MCF 10A (cell line): ENCODE measurements at regions of chr14 and their contacts with region 1.

Region 1: DNA sequence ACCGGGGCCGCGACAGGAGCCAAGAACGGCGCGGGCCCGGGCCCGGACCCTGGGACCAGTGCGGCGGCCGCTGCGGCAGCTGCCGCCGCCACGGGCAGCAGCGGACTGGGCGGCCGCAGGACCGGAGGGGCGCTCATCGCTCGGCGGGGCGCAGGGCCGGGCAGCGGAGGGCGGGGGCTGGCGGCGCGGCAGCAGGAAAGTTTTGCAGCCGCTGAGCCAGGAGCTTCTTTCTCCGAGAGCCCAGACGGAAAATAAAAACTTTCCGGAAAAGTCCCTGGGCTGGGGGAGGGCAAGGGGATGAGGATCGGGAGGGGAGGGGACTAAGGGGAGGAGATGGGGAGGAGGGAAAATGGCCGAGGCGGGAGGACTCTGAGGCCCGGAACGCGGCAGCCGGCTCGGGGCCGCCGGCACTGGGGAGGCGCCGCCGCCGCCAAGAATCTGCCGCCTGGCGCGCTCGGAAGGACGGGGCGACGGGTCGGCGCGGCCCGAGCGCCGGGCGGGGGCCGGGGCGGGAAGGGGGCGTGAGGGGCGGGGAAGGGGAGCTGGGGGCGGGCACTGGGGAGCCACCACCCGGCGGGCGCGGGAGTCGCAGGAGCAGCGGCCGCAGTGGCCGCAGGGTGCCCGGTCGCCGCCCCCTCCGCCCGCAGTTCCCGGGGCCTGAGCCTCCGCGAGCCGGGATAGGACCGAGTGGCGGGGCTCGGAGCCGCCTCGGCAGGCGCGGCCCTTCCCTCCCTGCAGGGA is at the start of gene PRKD1:
- DNase-seq: peak; percentile 50
- H3K4me3 Mint-ChIP-seq: peak within 1 kb of the TSS; percentile 98
- H3K27ac Mint-ChIP-seq: peak within 1 kb of the TSS; percentile 26
- H3K4me1 Mint-ChIP-seq: peaks cover 38% of the 10 kb centered on the region
- H3K27me3 Mint-ChIP-seq: no peaks in the 10 kb centered on the region
- CTCF ChIP-seq: peak; percentile 17
- total RNA-seq, gene PRKD1: 7.9 and 8.8 TPM in 2 replicates

Region 2: GRCh38 chr14:29627137-29627536 is 300.4 kb before region 1 on chr14:
- CTCF ChIA-PET with region 1: interaction called, 3 read pairs
- POLR2A ChIA-PET with region 1: no interaction called
- intact Hi-C with region 1: loop called (anchors 5 kb)
- DNase-seq: peak; percentile 13
- H3K4me3 Mint-ChIP-seq: no peak overlapping the region
- H3K27ac Mint-ChIP-seq: peak overlapping the region; percentile 79
- H3K4me1 Mint-ChIP-seq: peaks cover 13% of the 10 kb centered on the region
- H3K27me3 Mint-ChIP-seq: no peaks in the 10 kb centered on the region
- CTCF ChIP-seq: no peak

Region 3: GRCh38 chr14:29734732-29735131 is 192.8 kb before region 1 on chr14:
- CTCF ChIA-PET with region 1: no interaction called
- POLR2A ChIA-PET with region 1: no interaction called
- intact Hi-C with region 1: no loop called
- DNase-seq: no peak
- H3K4me3 Mint-ChIP-seq: no peak overlapping the region
- H3K27ac Mint-ChIP-seq: no peak overlapping the region
- H3K4me1 Mint-ChIP-seq: peaks cover 14% of the 10 kb centered on the region
- H3K27me3 Mint-ChIP-seq: no peaks in the 10 kb centered on the region
- CTCF ChIP-seq: no peak

Region 4: GRCh38 chr14:29805415-29806123 is 122.0 kb before region 1 on chr14:
- CTCF ChIA-PET with region 1: no interaction called
- POLR2A ChIA-PET with region 1: no interaction called
- intact Hi-C with region 1: loop called (anchors 10 kb)
- DNase-seq: peak; percentile 94
- H3K4me3 Mint-ChIP-seq: no peak overlapping the region
- H3K27ac Mint-ChIP-seq: peak overlapping the region; percentile 72
- H3K4me1 Mint-ChIP-seq: peaks cover 12% of the 10 kb centered on the region
- H3K27me3 Mint-ChIP-seq: no peaks in the 10 kb centered on the region
- CTCF ChIP-seq: no peak